ENCODE measurements at regions of chr6 and their contacts with region 1.

Region 1: GRCh38 chr6:53326372-53327016 is 22.3 kb downstream of the ELOVL5 start:
- DNase-seq: peak; percentile 41
- ATAC-seq: peak; percentile 17
- H3K4me3 Mint-ChIP-seq: no peak overlapping the region
- H3K27ac Mint-ChIP-seq: peak overlapping the region; percentile 23
- H3K4me1 Mint-ChIP-seq: peaks cover 68% of the 10 kb centered on the region
- H3K27me3 Mint-ChIP-seq: no peaks in the 10 kb centered on the region

Region 2: DNA sequence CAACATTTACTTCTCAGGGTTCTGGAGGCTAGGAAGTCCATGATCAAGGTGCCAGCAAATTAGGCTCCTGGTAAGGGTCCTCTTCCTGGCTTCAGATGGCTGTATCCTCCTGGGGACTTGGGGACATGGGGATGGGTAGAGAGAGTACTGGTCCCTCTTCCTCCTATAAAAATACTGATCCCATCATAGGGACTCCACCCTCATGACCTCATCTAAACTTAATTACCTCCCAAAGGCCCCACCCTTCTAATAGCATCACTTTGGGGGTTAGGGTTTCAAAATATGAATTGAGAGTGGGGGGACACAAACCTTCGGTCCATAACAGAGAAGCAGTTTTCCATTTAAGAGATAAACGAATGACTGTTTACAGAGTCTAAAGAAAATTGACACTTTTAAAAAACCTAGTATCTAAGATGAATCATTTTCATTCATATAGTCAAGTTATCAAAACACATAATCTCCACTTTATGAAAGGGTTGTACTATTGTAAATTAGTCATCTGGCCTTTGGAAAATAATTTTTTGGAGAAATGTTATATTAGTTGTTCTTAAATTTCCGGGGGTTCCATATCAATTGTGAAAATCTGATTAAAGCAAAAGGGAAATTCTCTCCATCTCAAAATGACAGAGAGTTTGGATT is 11.3 kb before region 1 on chr6:
- CTCF ChIA-PET with region 1: interaction called, 6 read pairs
- POLR2A ChIA-PET with region 1: no interaction called
- intact Hi-C with region 1: loop called in 1 of 2 experiments (anchors 1 kb)
- DNase-seq: no peak
- ATAC-seq: peak; percentile 45
- H3K4me3 Mint-ChIP-seq: no peak overlapping the region
- H3K27ac Mint-ChIP-seq: no peak overlapping the region
- H3K4me1 Mint-ChIP-seq: peaks cover 71% of the 10 kb centered on the region
- H3K27me3 Mint-ChIP-seq: no peaks in the 10 kb centered on the region

Region 3: GRCh38 chr6:53359072-53359842 is 32.8 kb after region 1 on chr6:
- CTCF ChIA-PET with region 1: no interaction called
- POLR2A ChIA-PET with region 1: no interaction called
- intact Hi-C with region 1: no loop called
- DNase-seq: peak; percentile 95
- ATAC-seq: peak; percentile 96
- H3K4me3 Mint-ChIP-seq: peak overlapping the region; percentile 87
- H3K27ac Mint-ChIP-seq: peak overlapping the region; percentile 98
- H3K4me1 Mint-ChIP-seq: peaks cover 45% of the 10 kb centered on the region
- H3K27me3 Mint-ChIP-seq: no peaks in the 10 kb centered on the region